Activated CD8-positive, alpha-beta memory T cell treated with anti-CD3 and anti-CD28 coated beads, Interleukin-2, amount 10 ng/mL, durations not matched to agents 7 days and 5 days (primary cell): ENCODE measurements at regions of chr3 and their contacts with region 1.

Region 1: DNA sequence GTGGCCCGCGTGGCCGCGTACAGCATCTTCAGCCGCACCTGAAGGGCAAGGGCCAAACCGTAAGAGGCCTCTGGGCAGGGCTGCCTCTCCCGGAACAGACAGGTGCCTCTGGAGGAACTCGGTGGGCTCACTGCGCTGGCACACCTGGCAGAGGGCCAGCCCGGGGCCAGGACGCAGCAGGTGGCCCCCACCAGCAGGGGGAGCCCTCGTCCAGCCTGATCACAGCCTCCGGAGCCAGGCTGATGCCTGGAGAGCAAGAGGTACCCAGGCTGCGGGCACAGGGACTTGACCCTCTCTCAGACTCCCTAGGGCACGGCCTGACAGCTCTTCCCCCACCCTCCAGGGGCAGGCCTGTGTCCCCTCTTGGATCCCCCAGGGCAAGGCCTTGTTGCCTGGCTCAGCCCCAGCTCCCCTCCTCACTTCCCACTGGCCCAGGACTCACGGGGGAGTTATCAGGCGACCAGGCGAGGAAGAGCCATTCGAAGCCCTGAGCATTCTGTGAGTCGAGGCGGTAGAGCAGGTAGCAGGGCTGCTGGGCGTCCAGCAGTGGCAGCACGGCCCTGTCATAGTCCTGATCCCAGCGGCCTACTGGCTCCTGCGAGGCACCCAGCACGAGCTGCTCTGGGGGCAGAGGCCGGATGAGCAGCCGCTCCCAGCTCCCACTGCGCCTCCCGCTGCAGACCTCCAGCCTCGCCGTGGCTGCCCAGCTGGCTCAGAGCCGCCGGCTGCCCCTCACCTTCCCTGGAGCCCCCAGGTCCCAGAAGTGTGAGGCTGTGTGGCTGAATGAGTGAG is 6.3 kb upstream of the TLR9 start:
- DNase-seq: peak; percentile 89
- ATAC-seq: peak; percentile 87
- H3K4me3 Mint-ChIP-seq: no peak overlapping the region
- H3K27ac Mint-ChIP-seq: peak overlapping the region; percentile 57
- H3K4me1 Mint-ChIP-seq: peaks cover 42% of the 10 kb centered on the region
- H3K27me3 Mint-ChIP-seq: no peaks in the 10 kb centered on the region

Region 2: DNA sequence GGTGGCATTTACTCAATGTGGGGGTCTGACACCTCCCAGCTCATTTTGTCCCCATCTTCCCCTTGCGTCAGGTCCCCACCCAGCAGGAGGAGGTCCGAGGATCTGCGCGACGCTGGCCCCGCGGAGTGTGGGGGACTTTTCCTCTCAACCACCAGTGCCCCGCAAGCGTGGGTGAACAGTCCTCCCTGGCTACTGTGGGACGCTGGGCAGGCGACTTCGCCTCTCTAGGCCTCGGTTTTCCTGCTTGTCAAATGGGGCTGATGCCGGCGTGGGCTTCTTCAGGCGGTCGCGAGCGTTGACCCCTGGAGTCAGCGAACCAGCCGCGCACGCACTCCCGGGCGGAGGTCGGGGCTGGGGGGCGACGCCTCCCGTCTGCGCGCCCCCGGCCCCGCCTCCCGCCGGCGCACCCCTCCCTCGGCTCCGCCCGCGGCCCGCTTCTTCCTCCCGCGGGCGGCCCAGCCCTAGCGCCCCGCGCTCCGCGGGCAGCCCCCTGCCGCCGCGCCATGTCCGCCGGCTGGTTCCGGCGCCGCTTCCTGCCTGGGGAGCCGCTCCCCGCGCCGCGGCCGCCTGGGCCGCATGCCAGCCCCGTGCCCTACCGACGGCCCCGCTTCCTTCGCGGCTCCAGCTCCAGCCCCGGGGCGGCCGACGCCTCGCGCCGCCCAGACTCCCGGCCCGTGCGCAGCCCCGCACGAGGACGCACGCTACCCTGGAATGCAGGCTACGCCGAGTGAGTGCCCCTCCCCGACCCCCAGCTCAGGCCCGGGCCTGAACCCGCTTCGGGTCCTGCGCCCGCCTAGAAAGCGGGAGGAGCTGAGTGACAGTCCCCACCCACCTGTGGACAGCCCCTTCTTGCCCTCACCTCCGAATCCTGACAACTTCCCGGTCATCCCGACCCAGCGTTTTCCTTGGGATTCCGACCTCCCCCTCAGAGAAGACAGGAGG is 13.9 kb after region 1 on chr3 and contains the start of gene PPM1M:
- CTCF ChIA-PET with region 1: interaction called, 48 read pairs
- DNase-seq: peak; percentile 74
- ATAC-seq: peak; percentile 67
- H3K4me3 Mint-ChIP-seq: peak within 1 kb of the TSS; percentile 91
- H3K27ac Mint-ChIP-seq: peak within 1 kb of the TSS; percentile 90
- H3K4me1 Mint-ChIP-seq: peaks cover 79% of the 10 kb centered on the region
- H3K27me3 Mint-ChIP-seq: no peaks in the 10 kb centered on the region
- total RNA-seq, gene PPM1M: 91.1 to 94.1 TPM

Region 3: GRCh38 chr3:52253314-52254304 is 21.9 kb after region 1 on chr3:
- CTCF ChIA-PET with region 1: interaction called, 48 read pairs
- DNase-seq: peak; percentile 90
- ATAC-seq: peak; percentile 90
- H3K4me3 Mint-ChIP-seq: peak overlapping the region; percentile 75
- H3K27ac Mint-ChIP-seq: peak overlapping the region; percentile 100
- H3K4me1 Mint-ChIP-seq: peaks cover 89% of the 10 kb centered on the region
- H3K27me3 Mint-ChIP-seq: no peaks in the 10 kb centered on the region

Region 4: DNA sequence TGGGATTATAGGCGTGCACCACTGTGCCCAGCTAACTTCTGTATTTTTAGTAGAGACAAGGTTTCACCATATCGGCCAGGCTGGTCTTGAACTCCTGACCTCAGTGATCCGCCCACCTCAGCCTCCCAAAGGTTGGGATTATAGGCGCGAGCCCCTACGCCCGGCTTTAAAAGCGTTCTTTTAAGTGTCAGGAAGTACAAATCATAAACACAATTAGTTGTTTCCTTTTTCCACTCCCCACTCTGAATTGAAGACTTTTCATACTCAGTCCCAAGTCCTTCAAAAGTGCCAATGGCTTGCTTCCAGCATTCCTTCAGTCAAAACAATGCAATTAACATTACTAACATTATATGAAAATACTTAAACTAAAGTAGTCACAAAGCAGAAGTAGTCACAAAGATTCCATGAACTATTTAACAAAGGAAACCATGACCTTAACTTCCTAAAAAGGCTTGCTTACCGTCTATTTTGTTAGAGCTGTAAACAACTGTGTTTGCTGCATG is 38.6 kb after region 1 on chr3:
- CTCF ChIA-PET with region 1: interaction called, 12 read pairs
- DNase-seq: no peak
- ATAC-seq: no peak
- H3K4me3 Mint-ChIP-seq: peak overlapping the region; percentile 69
- H3K27ac Mint-ChIP-seq: peak overlapping the region; percentile 85
- H3K4me1 Mint-ChIP-seq: peaks cover 84% of the 10 kb centered on the region
- H3K27me3 Mint-ChIP-seq: no peaks in the 10 kb centered on the region

Region 5: DNA sequence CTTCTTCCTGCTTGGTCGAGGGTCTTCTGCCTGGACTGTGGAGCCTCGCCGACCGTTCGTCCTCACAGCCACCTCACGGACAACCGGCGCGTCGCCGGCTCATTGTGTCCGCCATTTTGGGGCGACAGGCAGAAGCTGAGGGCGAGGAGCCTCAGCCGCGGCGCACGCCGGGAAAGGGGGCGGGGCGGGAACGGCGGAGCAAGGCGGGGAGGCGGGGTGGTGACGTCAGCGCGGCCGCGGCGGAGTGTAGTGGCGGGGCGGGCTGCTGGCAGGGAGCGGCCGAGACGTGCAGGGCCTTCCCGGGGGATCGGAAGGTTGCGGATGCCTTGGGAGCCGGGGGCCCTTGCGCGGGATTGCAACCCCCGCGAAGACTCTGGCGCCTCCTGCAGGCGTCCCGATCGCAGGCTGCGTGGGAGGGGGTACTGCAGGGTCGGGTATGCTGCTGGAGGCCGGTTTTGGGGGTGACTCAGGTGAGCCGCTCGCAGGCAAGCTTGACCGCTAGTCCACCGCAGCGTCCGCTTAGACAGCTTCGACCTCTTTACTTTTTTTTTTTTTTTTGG is 46.9 kb after region 1 on chr3 and contains the start of gene WDR82:
- CTCF ChIA-PET with region 1: interaction called, 176 read pairs
- DNase-seq: peak; percentile 98
- ATAC-seq: peak; percentile 76
- H3K4me3 Mint-ChIP-seq: peak within 1 kb of the TSS; percentile 99
- H3K27ac Mint-ChIP-seq: peak within 1 kb of the TSS; percentile 98
- H3K4me1 Mint-ChIP-seq: peaks cover 61% of the 10 kb centered on the region
- H3K27me3 Mint-ChIP-seq: no peaks in the 10 kb centered on the region
- total RNA-seq, gene WDR82: 114 to 132 TPM

Region 6: DNA sequence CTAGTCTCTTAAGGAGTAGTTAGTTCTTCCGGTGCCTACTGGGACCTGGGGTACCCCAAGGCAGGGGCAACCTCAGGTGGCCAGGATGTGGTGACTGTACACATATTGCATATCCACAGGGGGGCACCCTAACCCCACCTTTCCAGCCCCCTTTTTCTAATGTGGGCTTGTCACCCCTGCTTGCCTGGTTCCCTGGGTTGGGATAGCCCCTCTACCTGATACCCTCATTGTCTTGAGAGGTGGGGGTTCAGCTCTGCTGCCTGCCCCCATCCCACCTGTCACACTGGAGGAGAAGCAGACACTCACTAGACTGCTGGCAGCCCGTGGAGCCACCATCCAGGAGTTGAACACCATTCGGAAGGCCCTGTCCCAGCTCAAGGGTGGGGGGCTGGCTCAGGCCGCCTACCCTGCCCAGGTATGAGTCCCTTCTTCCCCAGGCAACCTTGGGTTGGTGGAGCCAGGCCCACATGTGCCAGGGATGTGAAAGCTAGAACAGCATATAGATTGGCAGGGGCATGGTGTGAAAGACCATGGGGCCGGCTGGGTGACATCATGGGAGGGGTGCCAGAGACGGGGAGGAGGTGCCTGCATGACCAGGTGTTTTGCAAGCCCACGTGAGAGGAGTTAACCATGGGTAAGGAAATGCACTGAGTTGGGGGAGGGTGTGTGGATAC is 59.9 kb after region 1 on chr3:
- CTCF ChIA-PET with region 1: interaction called, 38 read pairs
- DNase-seq: peak; percentile 75
- ATAC-seq: no peak
- H3K4me3 Mint-ChIP-seq: no peak overlapping the region
- H3K27ac Mint-ChIP-seq: peak overlapping the region; percentile 76
- H3K4me1 Mint-ChIP-seq: peaks cover 35% of the 10 kb centered on the region
- H3K27me3 Mint-ChIP-seq: no peaks in the 10 kb centered on the region